Activated B cell treated with CpG ODN at 0.5 μM for 24 hours (primary cell): ENCODE measurements at regions of chr18 and their contacts with region 1.

Region 1: DNA sequence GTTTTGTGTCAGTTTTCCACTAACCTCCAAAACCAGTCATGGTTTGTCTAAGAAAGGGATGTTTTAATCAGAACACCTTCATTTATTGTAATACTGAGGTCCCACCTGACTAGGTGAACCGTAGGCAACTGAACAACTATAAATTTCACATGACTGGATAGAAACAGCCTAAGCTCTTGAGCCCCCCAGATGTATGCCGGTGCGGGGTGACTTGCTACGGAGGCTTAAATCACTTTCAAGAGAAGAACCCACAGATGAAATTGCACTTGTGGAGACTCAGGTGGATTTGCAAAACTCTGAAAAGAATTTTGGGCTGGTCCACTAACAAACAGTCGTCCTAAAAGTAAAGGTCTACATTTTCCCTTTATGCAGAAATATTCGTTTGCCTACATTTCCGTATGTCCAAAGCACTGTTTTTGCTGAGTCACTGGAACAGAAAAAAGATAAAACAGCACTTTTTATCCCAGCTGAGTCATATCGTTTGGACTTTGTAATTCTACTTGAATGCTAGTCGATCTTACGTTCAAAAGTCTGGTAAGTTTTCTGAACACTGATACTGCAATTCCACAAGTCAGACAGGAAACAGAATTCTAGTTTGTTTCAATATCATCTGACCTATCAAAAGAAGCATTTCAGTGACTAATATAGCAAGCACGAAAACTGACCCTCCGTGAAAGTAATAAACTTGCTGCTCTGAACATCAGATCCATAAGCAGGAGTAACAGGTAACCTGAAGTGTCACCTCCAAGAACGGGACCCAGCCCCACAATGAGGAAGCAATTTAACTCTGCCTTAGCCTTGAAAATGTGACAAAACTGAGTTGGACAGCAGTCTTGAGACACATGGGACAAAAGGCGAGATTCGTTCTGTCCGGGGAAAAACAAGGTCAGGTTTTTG is 18.1 kb downstream of the ZNF516 start:
- DNase-seq: no peak
- ATAC-seq: peak; percentile 14
- H3K4me3 Mint-ChIP-seq: peak overlapping the region; percentile 29
- H3K27ac Mint-ChIP-seq: peak overlapping the region; percentile 19
- H3K4me1 Mint-ChIP-seq: peaks cover 30% of the 10 kb centered on the region
- H3K27me3 Mint-ChIP-seq: peaks cover 2% of the 10 kb centered on the region
- CTCF ChIP-seq: no peak

Region 2: DNA sequence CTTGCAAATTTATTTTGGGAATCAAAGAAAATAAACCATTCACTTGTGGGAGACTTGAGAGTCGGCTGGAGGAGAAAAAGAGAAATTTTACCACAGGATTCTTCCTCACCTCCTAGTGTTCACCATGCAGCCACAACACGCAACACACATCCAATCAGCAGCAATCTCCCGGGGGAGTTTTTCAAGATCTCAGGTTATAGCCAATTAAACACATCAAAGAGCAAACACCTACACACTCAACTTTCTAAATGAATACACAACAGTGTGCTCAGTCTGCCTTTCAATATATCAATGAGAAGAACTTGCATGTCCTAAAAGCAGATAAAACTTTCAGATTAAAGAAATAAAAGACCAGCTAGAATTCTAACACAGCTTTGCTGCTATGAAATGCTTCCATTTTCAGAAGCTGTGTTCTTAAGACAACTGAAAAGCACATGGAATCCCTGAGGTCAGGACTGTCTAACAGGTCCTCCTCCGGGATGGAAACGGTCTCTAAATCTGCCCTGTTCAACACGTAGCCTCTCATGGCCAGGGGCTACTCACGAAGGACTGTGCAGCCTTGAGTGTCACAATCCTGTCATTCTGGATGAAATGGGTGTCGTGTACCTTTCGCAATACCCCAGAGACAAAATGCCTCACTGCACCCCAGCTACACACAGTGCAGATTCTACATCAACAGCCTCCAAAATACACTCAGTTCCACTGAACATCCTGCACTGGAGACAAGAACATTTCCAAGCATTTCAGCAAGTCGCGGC is 66.1 kb before region 1 on chr18:
- CTCF ChIA-PET with region 1: no interaction called
- POLR2A ChIA-PET with region 1: no interaction called
- intact Hi-C with region 1: loop called (anchors 10 kb)
- DNase-seq: no peak
- ATAC-seq: no peak
- H3K4me3 Mint-ChIP-seq: no peak overlapping the region
- H3K27ac Mint-ChIP-seq: no peak overlapping the region
- H3K4me1 Mint-ChIP-seq: peaks cover 6% of the 10 kb centered on the region
- H3K27me3 Mint-ChIP-seq: no peaks in the 10 kb centered on the region
- CTCF ChIP-seq: no peak

Region 3: GRCh38 chr18:76620321-76621170 is 143.6 kb after region 1 on chr18:
- CTCF ChIA-PET with region 1: no interaction called
- POLR2A ChIA-PET with region 1: no interaction called
- intact Hi-C with region 1: loop called (anchors 5 kb)
- DNase-seq: peak; percentile 27
- ATAC-seq: peak; percentile 62
- H3K4me3 Mint-ChIP-seq: no peak overlapping the region
- H3K27ac Mint-ChIP-seq: no peak overlapping the region
- H3K4me1 Mint-ChIP-seq: peaks cover 7% of the 10 kb centered on the region
- H3K27me3 Mint-ChIP-seq: peaks cover 35% of the 10 kb centered on the region
- CTCF ChIP-seq: no peak

Region 4: GRCh38 chr18:77087393-77088141 is 610.7 kb after region 1 on chr18:
- CTCF ChIA-PET with region 1: no interaction called
- POLR2A ChIA-PET with region 1: no interaction called
- intact Hi-C with region 1: no loop called
- DNase-seq: no peak
- ATAC-seq: no peak
- H3K4me3 Mint-ChIP-seq: no peak overlapping the region
- H3K27ac Mint-ChIP-seq: no peak overlapping the region
- H3K4me1 Mint-ChIP-seq: peaks cover 58% of the 10 kb centered on the region
- H3K27me3 Mint-ChIP-seq: no peaks in the 10 kb centered on the region
- CTCF ChIP-seq: no peak